Endothelial cell of umbilical vein (primary cell): ENCODE measurements at regions of chr12 and their contacts with region 1.

Region 1: GRCh38 chr12:89709157-89709994 is 738 bp upstream of the ATP2B1 start:
- DNase-seq: peak; percentile 99
- H3K4me3 ChIP-seq: peak overlapping the region; percentile 48 to 75 (median 73)
- H3K27ac ChIP-seq: peak overlapping the region; percentile 67
- H3K4me1 ChIP-seq: peaks cover 12% of the 10 kb centered on the region
- H3K27me3 ChIP-seq: peaks cover 0 to 16% of the 10 kb centered on the region in 2 experiments
- CTCF ChIP-seq: peak in 1 of 2 donors; percentile 16
- POLR2A ChIP-seq: no peak

Region 2: DNA sequence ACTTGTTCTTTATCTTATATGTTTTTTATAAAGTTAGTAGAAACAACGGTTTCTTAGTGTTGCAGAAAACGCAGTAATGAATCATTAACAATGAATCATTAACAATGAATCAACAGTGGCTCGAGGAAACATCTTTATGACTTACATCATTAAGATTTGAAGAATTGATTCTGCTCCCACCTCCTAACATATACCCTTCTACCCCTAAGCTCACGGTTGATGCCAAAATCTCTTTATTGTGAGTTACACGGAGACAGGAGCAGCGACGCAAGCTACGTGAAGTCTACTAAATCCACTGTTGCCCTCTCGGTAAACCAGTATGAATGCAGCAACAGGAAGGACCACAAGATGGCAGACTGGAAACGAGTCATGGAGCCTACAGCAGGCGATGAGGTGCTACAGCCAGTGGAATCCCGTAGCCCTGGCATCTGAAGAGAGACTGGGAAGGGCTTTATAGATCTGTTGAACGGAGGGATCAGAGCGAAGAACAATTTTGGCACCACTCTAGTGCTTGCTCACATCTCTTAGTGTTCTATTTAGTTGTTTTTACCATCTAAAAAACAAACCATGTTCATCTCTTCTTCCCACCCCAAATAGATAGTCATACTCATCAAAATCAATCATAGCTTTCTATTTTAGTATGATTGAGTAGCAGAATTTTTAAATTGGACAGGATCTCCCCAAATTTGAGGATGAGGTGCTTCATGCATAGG is 689.8 kb before region 1 on chr12:
- CTCF ChIA-PET with region 1: no interaction called
- POLR2A ChIA-PET with region 1: no interaction called
- dilution Hi-C with region 1: no loop called
- intact Hi-C with region 1: loop called (anchors 5 kb)
- DNase-seq: peak; percentile 95
- H3K4me3 ChIP-seq: peak overlapping the region in 2 of 3 experiments; percentile 18 to 20
- H3K27ac ChIP-seq: no peak overlapping the region
- H3K4me1 ChIP-seq: peaks cover 8% of the 10 kb centered on the region
- H3K27me3 ChIP-seq: no peaks in the 10 kb centered on the region
- CTCF ChIP-seq: peak; percentile 81 to 83
- POLR2A ChIP-seq: no peak

Region 3: DNA sequence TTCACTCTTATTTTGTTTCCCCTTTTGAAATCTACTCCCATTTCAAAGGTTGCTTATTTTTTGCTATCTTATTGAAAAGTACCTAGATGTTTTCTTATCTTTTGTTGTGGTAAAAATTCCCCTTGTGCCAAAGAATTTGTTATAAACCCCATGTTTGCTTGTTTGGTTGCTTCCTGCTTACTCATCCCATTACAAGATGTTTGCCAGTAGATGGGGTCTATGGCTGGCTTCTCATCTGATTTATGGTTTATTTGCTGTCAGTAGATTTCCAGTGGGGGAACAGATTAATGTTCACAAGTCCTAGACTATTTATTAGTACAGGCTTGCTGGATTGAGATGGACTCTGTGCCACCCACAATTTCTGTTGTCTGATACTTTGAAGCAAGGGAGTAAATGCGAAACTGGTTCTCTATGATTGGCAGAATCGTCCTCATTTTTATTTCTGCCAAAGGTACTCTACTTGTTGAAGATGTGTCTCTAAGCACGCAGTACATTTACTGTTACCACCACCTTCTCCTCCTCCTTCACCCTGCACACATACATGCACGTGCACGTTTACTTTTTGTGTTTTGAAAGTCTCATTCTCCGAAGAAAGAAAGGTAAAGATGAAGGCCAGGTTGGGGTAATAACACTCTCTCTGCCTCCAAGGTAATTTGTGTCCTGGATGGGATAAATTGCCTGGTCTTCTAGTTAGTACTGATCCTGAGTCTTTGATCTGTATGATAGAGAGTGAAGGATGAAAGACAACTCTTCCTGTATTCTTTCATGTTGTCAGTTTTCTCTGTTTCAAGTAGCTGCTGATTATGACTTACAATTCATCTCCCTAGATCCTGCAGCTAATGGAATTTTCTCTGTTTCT is 116.4 kb after region 1 on chr12:
- CTCF ChIA-PET with region 1: no interaction called
- POLR2A ChIA-PET with region 1: no interaction called
- dilution Hi-C with region 1: no loop called
- intact Hi-C with region 1: loop called (anchors 1 kb)
- DNase-seq: peak; percentile 69
- H3K4me3 ChIP-seq: no peak overlapping the region
- H3K27ac ChIP-seq: no peak overlapping the region
- H3K4me1 ChIP-seq: no peaks in the 10 kb centered on the region
- H3K27me3 ChIP-seq: no peaks in the 10 kb centered on the region
- CTCF ChIP-seq: no peak
- POLR2A ChIP-seq: no peak

Region 4: DNA sequence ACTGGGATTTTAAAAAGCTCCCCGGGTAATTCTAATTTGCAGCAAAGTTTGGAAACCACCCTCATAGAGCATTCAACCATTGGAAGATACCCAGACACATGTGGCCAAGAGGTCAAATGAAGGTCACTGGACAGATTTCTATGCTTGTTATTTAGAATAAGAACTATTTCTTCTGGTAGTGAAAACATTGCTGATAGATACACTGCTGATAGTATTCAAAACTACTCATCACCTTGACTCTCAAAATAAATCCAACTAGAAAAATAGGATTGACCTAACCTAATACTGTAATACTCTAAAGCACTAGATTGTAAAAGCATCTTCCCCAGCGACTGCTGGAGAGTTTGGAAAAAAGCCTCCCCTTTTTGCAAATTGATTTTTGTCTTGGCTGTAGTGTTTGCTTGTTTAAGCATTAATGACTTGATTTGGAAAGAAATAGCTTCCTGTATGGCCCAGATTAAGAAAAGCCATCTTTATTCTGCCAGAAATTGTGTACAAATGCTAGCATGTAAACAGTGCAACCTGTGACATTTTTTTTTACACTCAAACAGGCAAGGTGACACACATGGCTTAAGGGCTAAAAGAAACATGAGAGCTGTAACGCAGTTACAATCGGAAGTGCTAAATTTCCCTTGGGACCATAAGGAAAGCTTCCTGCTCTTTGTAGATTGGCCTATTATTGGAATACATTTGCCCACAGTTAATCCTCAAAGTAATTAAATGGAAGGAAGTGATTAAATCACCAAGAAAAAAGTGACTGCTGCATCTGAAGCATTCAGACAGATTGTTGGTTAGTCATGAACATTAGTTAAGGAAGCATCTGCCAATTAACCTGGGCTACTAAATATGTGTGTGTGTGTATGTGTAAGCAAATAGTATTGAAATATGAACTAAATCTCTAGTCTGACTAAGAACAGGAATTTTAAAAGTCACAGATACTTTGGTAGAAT is 355.8 kb after region 1 on chr12:
- CTCF ChIA-PET with region 1: no interaction called
- POLR2A ChIA-PET with region 1: no interaction called
- dilution Hi-C with region 1: no loop called
- intact Hi-C with region 1: loop called (anchors 2 kb)
- DNase-seq: peak; percentile 83
- H3K4me3 ChIP-seq: no peak overlapping the region
- H3K27ac ChIP-seq: no peak overlapping the region
- H3K4me1 ChIP-seq: peaks cover 10% of the 10 kb centered on the region
- H3K27me3 ChIP-seq: no peaks in the 10 kb centered on the region
- CTCF ChIP-seq: no peak
- POLR2A ChIP-seq: no peak

Region 5: DNA sequence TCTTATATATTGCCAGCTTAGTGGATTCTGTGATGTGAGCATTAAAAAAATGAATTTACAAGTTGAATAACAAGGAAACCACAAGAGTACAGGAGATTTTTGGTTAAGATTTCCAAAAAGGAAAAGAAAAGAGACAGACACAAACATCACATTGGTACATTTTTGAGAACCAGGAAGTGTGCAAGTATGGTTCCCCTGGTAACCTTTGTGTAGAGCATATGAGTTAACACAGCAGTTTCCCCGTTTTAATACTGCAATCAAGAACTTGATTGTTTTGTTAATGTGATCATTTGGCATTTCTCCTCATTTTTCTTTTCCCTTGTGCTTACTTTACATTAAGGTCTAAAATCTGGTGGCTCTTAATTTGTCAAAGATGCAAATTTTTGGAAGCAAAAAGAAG is 489.6 kb after region 1 on chr12:
- CTCF ChIA-PET with region 1: no interaction called
- POLR2A ChIA-PET with region 1: no interaction called
- dilution Hi-C with region 1: no loop called
- intact Hi-C with region 1: loop called (anchors 1 kb)
- DNase-seq: peak; percentile 91
- H3K4me3 ChIP-seq: peak overlapping the region in 1 of 3 experiments; percentile 17
- H3K27ac ChIP-seq: peak overlapping the region; percentile 95
- H3K4me1 ChIP-seq: peaks cover 27% of the 10 kb centered on the region
- H3K27me3 ChIP-seq: no peaks in the 10 kb centered on the region
- CTCF ChIP-seq: no peak
- POLR2A ChIP-seq: no peak

Region 6: GRCh38 chr12:90229407-90230170 is 520.2 kb after region 1 on chr12:
- CTCF ChIA-PET with region 1: no interaction called
- POLR2A ChIA-PET with region 1: no interaction called
- dilution Hi-C with region 1: no loop called
- intact Hi-C with region 1: loop called (anchors 1 kb)
- DNase-seq: peak; percentile 92
- H3K4me3 ChIP-seq: peak overlapping the region in 1 of 3 experiments; percentile 38
- H3K27ac ChIP-seq: peak overlapping the region; percentile 66
- H3K4me1 ChIP-seq: peaks cover 25% of the 10 kb centered on the region
- H3K27me3 ChIP-seq: no peaks in the 10 kb centered on the region
- CTCF ChIP-seq: no peak
- POLR2A ChIP-seq: no peak

Region 7: GRCh38 chr12:90327793-90328743 is 618.7 kb after region 1 on chr12:
- CTCF ChIA-PET with region 1: no interaction called
- POLR2A ChIA-PET with region 1: no interaction called
- dilution Hi-C with region 1: no loop called
- intact Hi-C with region 1: loop called (anchors 1 kb)
- DNase-seq: peak; percentile 89
- H3K4me3 ChIP-seq: no peak overlapping the region
- H3K27ac ChIP-seq: peak overlapping the region; percentile 97
- H3K4me1 ChIP-seq: peaks cover 53% of the 10 kb centered on the region
- H3K27me3 ChIP-seq: no peaks in the 10 kb centered on the region
- CTCF ChIP-seq: no peak
- POLR2A ChIP-seq: no peak